PC-3 (cell line): ENCODE measurements at regions of chr21 and their contacts with region 1.

Region 1: DNA sequence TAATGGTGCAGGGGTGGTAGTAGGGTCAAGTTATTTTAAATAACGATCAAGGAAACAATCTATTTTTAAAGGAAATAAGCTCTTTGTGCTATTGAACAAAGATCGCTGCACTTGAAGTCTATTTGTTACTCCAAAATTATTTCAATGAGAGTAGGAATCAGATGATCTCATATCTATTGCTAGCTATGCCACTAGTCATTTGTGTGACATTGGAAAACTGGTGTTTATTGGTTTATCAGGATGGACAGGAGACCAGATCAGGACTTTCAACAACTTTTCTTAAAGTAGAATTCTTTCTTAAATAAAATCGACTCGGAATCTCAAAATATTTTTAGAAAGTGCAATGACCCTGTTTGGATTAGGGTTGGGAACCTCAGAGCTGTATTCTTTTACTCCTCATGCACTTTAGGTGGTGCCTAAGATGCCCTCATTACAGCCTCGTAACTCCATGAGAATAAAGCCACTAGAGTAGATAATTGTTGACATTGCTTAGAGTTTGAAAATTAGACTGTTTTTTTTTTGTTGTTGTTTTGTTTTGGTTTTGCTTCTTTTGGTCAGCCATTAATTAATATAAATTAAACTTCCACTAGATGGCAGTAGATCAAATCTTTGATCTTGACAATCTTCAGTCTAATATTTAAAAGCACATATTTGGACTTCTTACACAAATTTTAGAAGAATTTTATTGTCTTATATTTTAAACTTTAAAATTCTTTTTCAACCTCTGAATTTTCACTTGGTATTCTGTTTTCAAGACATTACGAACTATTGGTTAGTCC is 352.4 kb downstream of the USP25 start:
- DNase-seq: peak; percentile 60
- ATAC-seq: no peak
- H3K4me3 ChIP-seq: peak overlapping the region; percentile 7; the same call in 1 of the 2 replicates
- H3K27ac ChIP-seq: no peak overlapping the region
- H3K4me1 ChIP-seq: peaks cover 63% of the 10 kb centered on the region
- H3K27me3 ChIP-seq: peaks cover 5% of the 10 kb centered on the region; the same call in 1 of the 2 replicates
- CTCF ChIP-seq: peak; percentile 66

Region 2: GRCh38 chr21:15894596-15894995 is 187.6 kb before region 1 on chr21:
- CTCF ChIA-PET with region 1: no interaction called
- POLR2A ChIA-PET with region 1: no interaction called
- intact Hi-C with region 1: loop called (anchors 2 kb)
- DNase-seq: peak; percentile 41
- ATAC-seq: peak; percentile 43
- H3K4me3 ChIP-seq: no peak overlapping the region
- H3K27ac ChIP-seq: no peak overlapping the region
- H3K4me1 ChIP-seq: no peaks in the 10 kb centered on the region
- H3K27me3 ChIP-seq: no peaks in the 10 kb centered on the region
- CTCF ChIP-seq: peak; percentile 70

Region 3: DNA sequence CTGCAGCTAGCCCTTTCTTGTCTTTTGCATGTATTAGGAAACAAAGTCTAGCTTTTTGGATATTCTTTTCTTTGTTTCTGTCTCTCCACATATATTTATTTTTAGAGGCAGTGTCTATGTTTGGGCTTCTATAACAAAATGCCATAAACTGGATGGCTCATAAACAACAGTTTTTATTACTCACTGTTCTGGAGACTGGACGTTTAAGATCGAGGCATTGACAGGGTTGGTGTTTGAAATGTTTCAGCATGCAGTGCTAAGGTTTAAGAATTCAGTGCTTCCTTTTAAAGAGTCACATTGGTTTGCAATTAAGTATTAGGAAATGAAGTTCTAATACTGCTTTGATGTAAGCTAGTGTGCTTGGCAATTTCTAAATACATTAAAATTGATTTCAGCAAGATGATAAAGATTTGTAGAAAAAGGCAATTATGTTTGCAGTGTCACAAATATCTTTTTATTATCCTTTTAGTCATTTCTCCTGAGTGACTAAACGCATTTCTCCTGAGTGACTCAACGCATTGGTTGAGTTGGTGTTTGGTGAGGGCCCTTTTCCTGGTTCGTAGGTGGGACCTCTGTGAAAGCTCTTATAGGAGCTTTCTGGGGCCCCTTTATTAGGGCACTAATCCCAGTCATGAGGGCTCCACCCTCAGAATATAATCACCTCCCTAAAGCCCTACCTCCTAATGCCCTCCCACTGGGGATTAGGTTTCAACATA is 35.4 kb before region 1 on chr21:
- CTCF ChIA-PET with region 1: no interaction called
- POLR2A ChIA-PET with region 1: no interaction called
- intact Hi-C with region 1: loop called (anchors 2 kb)
- DNase-seq: peak; percentile 91
- ATAC-seq: peak; percentile 98
- H3K4me3 ChIP-seq: peak overlapping the region; percentile 36; the same call in 1 of the 2 replicates
- H3K27ac ChIP-seq: peak overlapping the region; percentile 76
- H3K4me1 ChIP-seq: peaks cover 17% of the 10 kb centered on the region
- H3K27me3 ChIP-seq: no peaks in the 10 kb centered on the region
- CTCF ChIP-seq: no peak

Region 4: DNA sequence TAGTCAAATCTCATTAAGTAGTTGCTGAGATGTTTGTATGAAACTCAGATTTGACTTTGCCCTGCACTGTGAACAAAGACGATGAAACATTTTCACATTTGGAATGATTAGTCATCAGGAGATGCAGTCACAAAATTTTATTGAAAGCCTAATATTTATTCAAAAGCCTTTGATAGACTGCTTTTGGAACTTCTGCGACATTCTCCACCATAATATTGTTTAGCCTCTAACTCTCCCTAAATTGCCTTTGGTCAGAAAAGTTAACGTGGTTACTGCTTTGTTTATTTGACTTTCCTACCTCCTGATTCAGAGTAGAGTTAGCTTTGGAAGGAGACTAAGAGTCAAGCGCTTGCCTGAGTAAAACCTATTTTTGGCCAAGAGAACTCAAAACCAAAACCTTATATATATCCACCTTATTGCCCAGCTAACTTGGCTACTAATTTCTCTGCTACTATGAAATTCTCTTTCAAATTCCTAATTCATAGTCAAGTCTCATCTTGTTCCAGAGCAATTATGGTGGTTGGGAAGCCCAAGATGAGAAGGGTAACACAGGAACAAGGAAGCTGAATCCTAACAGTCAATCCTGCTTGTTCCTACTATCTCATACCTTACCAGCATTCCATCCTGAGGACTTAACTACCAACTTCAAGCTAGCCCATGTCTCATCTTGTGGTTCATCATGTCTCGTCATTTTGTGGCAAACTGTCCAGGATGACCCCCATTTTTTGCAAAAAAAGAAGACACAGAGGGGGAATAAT is 77.2 kb after region 1 on chr21:
- CTCF ChIA-PET with region 1: no interaction called
- POLR2A ChIA-PET with region 1: no interaction called
- intact Hi-C with region 1: loop called (anchors 1 kb)
- DNase-seq: peak; percentile 71
- ATAC-seq: peak; percentile 94
- H3K4me3 ChIP-seq: peak overlapping the region; percentile 24; the same call in 1 of the 2 replicates
- H3K27ac ChIP-seq: peak overlapping the region; percentile 81
- H3K4me1 ChIP-seq: peaks cover 19% of the 10 kb centered on the region
- H3K27me3 ChIP-seq: no peaks in the 10 kb centered on the region
- CTCF ChIP-seq: no peak

Region 5: GRCh38 chr21:16330082-16330907 is 248.1 kb after region 1 on chr21:
- CTCF ChIA-PET with region 1: interaction called, 3 read pairs
- POLR2A ChIA-PET with region 1: no interaction called
- intact Hi-C with region 1: loop called (anchors 1 kb)
- DNase-seq: peak; percentile 87
- ATAC-seq: peak; percentile 100
- H3K4me3 ChIP-seq: no peak overlapping the region
- H3K27ac ChIP-seq: no peak overlapping the region
- H3K4me1 ChIP-seq: no peaks in the 10 kb centered on the region
- H3K27me3 ChIP-seq: peaks cover 2% of the 10 kb centered on the region
- CTCF ChIP-seq: peak; percentile 87